CD8-positive, alpha-beta T cell (primary cell): ENCODE measurements at regions of chr1 and their contacts with region 1.

Region 1: GRCh38 chr1:213987927-213988506 is at the start of gene PROX1:
- DNase-seq: peak in 5 of 9 experiments; percentile 7 to 57 (median 23)
- ATAC-seq: peak; percentile 81
- H3K4me3 ChIP-seq: peak within 1 kb of the TSS; percentile 15 to 43
- H3K4me3 Mint-ChIP-seq: peak within 1 kb of the TSS; percentile 86
- H3K27ac ChIP-seq: no peak within 1 kb of the TSS
- H3K27ac Mint-ChIP-seq: peak within 1 kb of the TSS; percentile 41
- H3K4me1 ChIP-seq: peaks cover 21% of the 10 kb centered on the region
- H3K4me1 Mint-ChIP-seq: peaks cover 37% of the 10 kb centered on the region
- H3K27me3 ChIP-seq: peaks cover 37 to 41% of the 10 kb centered on the region in 2 experiments
- H3K27me3 Mint-ChIP-seq: peaks cover 83% of the 10 kb centered on the region
- CTCF ChIP-seq: no peak
- total RNA-seq, gene PROX1: not detected

Region 2: GRCh38 chr1:213669964-213670691 is 317.9 kb before region 1 on chr1:
- CTCF ChIA-PET with region 1: no interaction called
- POLR2A ChIA-PET with region 1: no interaction called
- intact Hi-C with region 1: loop called in 1 of 2 experiments (anchors 5 kb)
- DNase-seq: peak; percentile 1 to 62 (median 12)
- ATAC-seq: peak; percentile 90
- H3K4me3 ChIP-seq: no peak overlapping the region
- H3K4me3 Mint-ChIP-seq: no peak overlapping the region
- H3K27ac ChIP-seq: no peak overlapping the region
- H3K27ac Mint-ChIP-seq: peak overlapping the region; percentile 25
- H3K4me1 ChIP-seq: peaks cover 5% of the 10 kb centered on the region
- H3K4me1 Mint-ChIP-seq: peaks cover 7% of the 10 kb centered on the region
- H3K27me3 ChIP-seq: no peaks in the 10 kb centered on the region
- H3K27me3 Mint-ChIP-seq: no peaks in the 10 kb centered on the region
- CTCF ChIP-seq: no peak

Region 3: GRCh38 chr1:213858581-213858980 is 129.4 kb before region 1 on chr1:
- CTCF ChIA-PET with region 1: no interaction called
- POLR2A ChIA-PET with region 1: no interaction called
- intact Hi-C with region 1: loop called in 1 of 2 experiments (anchors 10 kb)
- DNase-seq: no peak
- ATAC-seq: no peak
- H3K4me3 ChIP-seq: no peak overlapping the region
- H3K4me3 Mint-ChIP-seq: no peak overlapping the region
- H3K27ac ChIP-seq: no peak overlapping the region
- H3K27ac Mint-ChIP-seq: no peak overlapping the region
- H3K4me1 ChIP-seq: no peaks in the 10 kb centered on the region
- H3K4me1 Mint-ChIP-seq: peaks cover 6% of the 10 kb centered on the region
- H3K27me3 ChIP-seq: no peaks in the 10 kb centered on the region
- H3K27me3 Mint-ChIP-seq: peaks cover 3% of the 10 kb centered on the region
- CTCF ChIP-seq: no peak

Region 4: GRCh38 chr1:214008791-214009620 is 21.0 kb after region 1 on chr1:
- CTCF ChIA-PET with region 1: no interaction called
- POLR2A ChIA-PET with region 1: no interaction called
- intact Hi-C with region 1: no loop called
- DNase-seq: no peak
- ATAC-seq: no peak
- H3K4me3 ChIP-seq: no peak overlapping the region
- H3K4me3 Mint-ChIP-seq: no peak overlapping the region
- H3K27ac ChIP-seq: no peak overlapping the region
- H3K27ac Mint-ChIP-seq: no peak overlapping the region
- H3K4me1 ChIP-seq: no peaks in the 10 kb centered on the region
- H3K4me1 Mint-ChIP-seq: no peaks in the 10 kb centered on the region
- H3K27me3 ChIP-seq: peaks cover 0 to 4% of the 10 kb centered on the region in 2 experiments
- H3K27me3 Mint-ChIP-seq: peaks cover 6% of the 10 kb centered on the region
- CTCF ChIP-seq: no peak